Naive thymus-derived CD4-positive, alpha-beta T cell (primary cell): ENCODE measurements at regions of chr11 and their contacts with region 1.

Region 1: GRCh38 chr11:1389103-1389931 is 417 bp upstream of the BRSK2 start:
- DNase-seq: peak; percentile 92 to 98 (median 98)
- ATAC-seq: peak; percentile 97
- H3K4me3 ChIP-seq: peak overlapping the region; percentile 64
- H3K4me3 Mint-ChIP-seq: peak overlapping the region; percentile 62 to 86 (median 76)
- H3K27ac ChIP-seq: peak overlapping the region; percentile 60
- H3K27ac Mint-ChIP-seq: peak overlapping the region in 3 of 9 donors; percentile 19 to 76 (median 55)
- H3K4me1 ChIP-seq: peaks cover 7 to 8% of the 10 kb centered on the region in 2 donors
- H3K4me1 Mint-ChIP-seq: peaks cover 0 to 15% (median 10%) of the 10 kb centered on the region in 7 donors
- H3K27me3 ChIP-seq: no peaks in the 10 kb centered on the region
- H3K27me3 Mint-ChIP-seq: peaks cover 23 to 55% (median 26%) of the 10 kb centered on the region in 5 donors

Region 2: GRCh38 chr11:842370-843002 is 546.8 kb before region 1 on chr11 and contains the starts of genes POLR2L and TSPAN4:
- CTCF ChIA-PET with region 1: no interaction called
- POLR2A ChIA-PET with region 1: no interaction called
- intact Hi-C with region 1: loop called in 1 of 2 experiments (anchors 10 kb)
- DNase-seq: peak; percentile 76 to 97 (median 81)
- ATAC-seq: peak; percentile 86
- H3K4me3 ChIP-seq: peak within 1 kb of the TSS; percentile 83
- H3K4me3 Mint-ChIP-seq: peak within 1 kb of the TSS; percentile 74 to 89 (median 86)
- H3K27ac ChIP-seq: peak within 1 kb of the TSS; percentile 89
- H3K27ac Mint-ChIP-seq: peak within 1 kb of the TSS; percentile 28 to 89 (median 70)
- H3K4me1 ChIP-seq: peaks cover 16 to 21% of the 10 kb centered on the region in 2 donors
- H3K4me1 Mint-ChIP-seq: peaks cover 5 to 36% (median 18%) of the 10 kb centered on the region in 7 donors
- H3K27me3 ChIP-seq: no peaks in the 10 kb centered on the region
- H3K27me3 Mint-ChIP-seq: peaks cover 0 to 2% (median 0%) of the 10 kb centered on the region in 5 donors
- total RNA-seq, gene POLR2L: 31.2 to 93.3 (median 44.9) TPM
- total RNA-seq, gene TSPAN4: 4.8 to 12.6 (median 6.6) TPM

Region 3: GRCh38 chr11:910589-911195 is 478.6 kb before region 1 on chr11 and contains the start of gene CHID1:
- CTCF ChIA-PET with region 1: no interaction called
- POLR2A ChIA-PET with region 1: no interaction called
- intact Hi-C with region 1: loop called in 1 of 2 experiments (anchors 10 kb)
- DNase-seq: peak; percentile 60 to 94 (median 73)
- ATAC-seq: peak; percentile 98
- H3K4me3 ChIP-seq: peak within 1 kb of the TSS; percentile 68
- H3K4me3 Mint-ChIP-seq: peak within 1 kb of the TSS; percentile 82 to 99 (median 90)
- H3K27ac ChIP-seq: peak within 1 kb of the TSS; percentile 79
- H3K27ac Mint-ChIP-seq: peak within 1 kb of the TSS; percentile 73 to 97 (median 86)
- H3K4me1 ChIP-seq: peaks cover 4 to 10% of the 10 kb centered on the region in 2 donors
- H3K4me1 Mint-ChIP-seq: peaks cover 15 to 24% (median 20%) of the 10 kb centered on the region in 7 donors
- H3K27me3 ChIP-seq: no peaks in the 10 kb centered on the region
- H3K27me3 Mint-ChIP-seq: no peaks in the 10 kb centered on the region
- total RNA-seq, gene CHID1: 30.8 to 56.3 (median 53.0) TPM

Region 4: DNA sequence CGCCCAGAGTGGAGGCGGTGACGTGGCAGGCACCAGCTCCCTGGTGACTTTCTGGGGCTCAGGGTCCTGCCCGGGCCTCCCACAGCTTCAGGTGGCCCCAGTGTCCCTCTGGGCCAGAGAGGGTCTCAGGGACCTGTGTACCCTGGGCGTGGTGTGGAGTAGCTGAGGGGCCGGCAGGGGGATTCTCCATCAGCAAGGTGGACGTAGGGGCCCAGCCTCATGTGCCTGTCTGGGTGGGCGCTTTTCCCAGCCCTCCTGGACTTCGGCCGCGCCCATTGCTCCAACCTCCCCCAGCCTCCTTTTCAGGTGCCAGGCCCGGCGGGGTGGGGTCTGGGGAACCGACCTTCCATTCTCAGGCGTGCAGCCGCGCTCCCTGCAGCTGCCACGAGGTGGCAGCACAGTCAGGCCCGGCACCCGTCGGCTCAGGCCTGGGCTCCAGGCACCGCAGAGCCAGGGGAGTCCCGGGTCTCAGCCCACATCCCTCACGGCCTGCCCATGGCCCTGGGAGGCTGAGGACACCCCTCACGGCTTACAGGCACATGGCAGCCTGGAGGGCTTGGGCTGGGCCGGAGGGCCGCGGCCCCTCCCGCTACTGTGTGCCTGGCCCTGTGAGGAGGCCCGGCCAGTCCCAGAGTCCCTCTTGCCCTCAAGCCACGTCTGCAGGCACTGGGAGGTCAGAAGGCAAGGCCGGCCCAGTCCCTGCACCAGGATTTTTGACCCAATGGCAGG is 186.4 kb before region 1 on chr11:
- CTCF ChIA-PET with region 1: no interaction called
- POLR2A ChIA-PET with region 1: no interaction called
- intact Hi-C with region 1: loop called in 1 of 2 experiments (anchors 1 kb)
- DNase-seq: peak in 8 of 9 donors; percentile 34 to 73 (median 60)
- ATAC-seq: peak; percentile 83
- H3K4me3 ChIP-seq: no peak overlapping the region
- H3K4me3 Mint-ChIP-seq: no peak overlapping the region
- H3K27ac ChIP-seq: no peak overlapping the region
- H3K27ac Mint-ChIP-seq: no peak overlapping the region
- H3K4me1 ChIP-seq: no peaks in the 10 kb centered on the region
- H3K4me1 Mint-ChIP-seq: no peaks in the 10 kb centered on the region
- H3K27me3 ChIP-seq: no peaks in the 10 kb centered on the region
- H3K27me3 Mint-ChIP-seq: no peaks in the 10 kb centered on the region

Region 5: GRCh38 chr11:1262172-1263006 is 126.9 kb before region 1 on chr11:
- CTCF ChIA-PET with region 1: no interaction called
- POLR2A ChIA-PET with region 1: interaction called, 3 read pairs
- intact Hi-C with region 1: loop called in 1 of 2 experiments (anchors 1 kb)
- DNase-seq: peak; percentile 72 to 91 (median 84)
- ATAC-seq: peak; percentile 93
- H3K4me3 ChIP-seq: peak overlapping the region; percentile 77
- H3K4me3 Mint-ChIP-seq: peak overlapping the region; percentile 74 to 90 (median 85)
- H3K27ac ChIP-seq: peak overlapping the region; percentile 89
- H3K27ac Mint-ChIP-seq: peak overlapping the region; percentile 78 to 95 (median 91)
- H3K4me1 ChIP-seq: peaks cover 13 to 15% of the 10 kb centered on the region in 2 donors
- H3K4me1 Mint-ChIP-seq: peaks cover 0 to 34% (median 12%) of the 10 kb centered on the region in 7 donors
- H3K27me3 ChIP-seq: no peaks in the 10 kb centered on the region
- H3K27me3 Mint-ChIP-seq: no peaks in the 10 kb centered on the region

Region 6: DNA sequence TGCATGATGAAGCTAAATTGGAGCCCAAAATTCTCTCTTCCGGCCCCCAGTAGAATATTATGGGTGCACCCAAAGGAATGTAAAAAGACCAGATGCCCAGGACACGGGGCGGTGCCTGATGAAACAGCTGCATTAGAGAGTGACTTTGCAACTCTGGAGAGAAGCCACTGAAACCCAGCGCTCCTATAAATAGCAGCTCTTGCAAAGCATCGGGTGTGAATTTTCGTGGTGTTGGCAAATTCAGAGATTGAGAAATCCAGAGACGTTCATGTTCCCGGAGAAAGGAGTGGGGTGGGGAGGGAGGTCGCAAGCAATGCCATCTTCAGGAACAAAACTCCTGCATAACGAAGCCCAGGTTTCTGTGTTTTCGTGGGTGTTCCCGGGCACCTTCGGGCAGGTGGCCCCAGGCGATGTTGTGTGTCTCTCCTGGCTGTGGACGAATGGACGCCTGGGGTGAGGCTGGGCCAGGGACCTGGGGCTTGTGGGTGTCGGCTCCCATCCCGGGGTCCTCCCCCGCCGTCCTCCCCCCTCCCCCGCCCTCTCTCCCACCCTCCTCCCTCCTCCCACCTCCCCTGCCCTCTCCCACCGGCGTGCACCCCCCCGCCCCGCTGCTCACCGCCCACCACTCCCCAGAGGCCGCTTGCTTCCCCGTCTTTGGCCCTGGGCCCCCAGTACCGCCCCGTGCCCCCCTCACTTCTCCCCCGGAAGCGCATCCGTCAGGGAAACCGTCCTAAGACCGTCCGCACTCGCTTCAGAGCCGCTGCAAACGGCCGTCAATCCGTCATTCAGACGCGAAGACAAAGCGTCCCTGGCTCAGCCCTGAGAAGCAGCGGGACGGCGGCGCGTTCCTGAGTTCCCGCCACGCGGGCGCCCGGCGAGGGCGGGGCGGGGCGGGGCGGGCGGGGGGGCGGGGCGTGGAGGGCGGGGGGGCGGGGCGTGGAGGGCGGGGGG is 53.2 kb before region 1 on chr11:
- CTCF ChIA-PET with region 1: no interaction called
- POLR2A ChIA-PET with region 1: no interaction called
- intact Hi-C with region 1: loop called (anchors 1 to 2 kb)
- DNase-seq: peak; percentile 40 to 64 (median 61)
- ATAC-seq: peak; percentile 73
- H3K4me3 ChIP-seq: peak overlapping the region; percentile 59
- H3K4me3 Mint-ChIP-seq: peak overlapping the region; percentile 76 to 89 (median 82)
- H3K27ac ChIP-seq: peak overlapping the region; percentile 45
- H3K27ac Mint-ChIP-seq: peak overlapping the region; percentile 40 to 89 (median 62)
- H3K4me1 ChIP-seq: peaks cover 10% of the 10 kb centered on the region in 2 donors
- H3K4me1 Mint-ChIP-seq: peaks cover 15 to 22% (median 17%) of the 10 kb centered on the region in 7 donors
- H3K27me3 ChIP-seq: no peaks in the 10 kb centered on the region
- H3K27me3 Mint-ChIP-seq: peaks cover 0 to 20% (median 0%) of the 10 kb centered on the region in 5 donors